ENCODE measurements at regions of chr13 and their contacts with region 1.

Region 1: DNA sequence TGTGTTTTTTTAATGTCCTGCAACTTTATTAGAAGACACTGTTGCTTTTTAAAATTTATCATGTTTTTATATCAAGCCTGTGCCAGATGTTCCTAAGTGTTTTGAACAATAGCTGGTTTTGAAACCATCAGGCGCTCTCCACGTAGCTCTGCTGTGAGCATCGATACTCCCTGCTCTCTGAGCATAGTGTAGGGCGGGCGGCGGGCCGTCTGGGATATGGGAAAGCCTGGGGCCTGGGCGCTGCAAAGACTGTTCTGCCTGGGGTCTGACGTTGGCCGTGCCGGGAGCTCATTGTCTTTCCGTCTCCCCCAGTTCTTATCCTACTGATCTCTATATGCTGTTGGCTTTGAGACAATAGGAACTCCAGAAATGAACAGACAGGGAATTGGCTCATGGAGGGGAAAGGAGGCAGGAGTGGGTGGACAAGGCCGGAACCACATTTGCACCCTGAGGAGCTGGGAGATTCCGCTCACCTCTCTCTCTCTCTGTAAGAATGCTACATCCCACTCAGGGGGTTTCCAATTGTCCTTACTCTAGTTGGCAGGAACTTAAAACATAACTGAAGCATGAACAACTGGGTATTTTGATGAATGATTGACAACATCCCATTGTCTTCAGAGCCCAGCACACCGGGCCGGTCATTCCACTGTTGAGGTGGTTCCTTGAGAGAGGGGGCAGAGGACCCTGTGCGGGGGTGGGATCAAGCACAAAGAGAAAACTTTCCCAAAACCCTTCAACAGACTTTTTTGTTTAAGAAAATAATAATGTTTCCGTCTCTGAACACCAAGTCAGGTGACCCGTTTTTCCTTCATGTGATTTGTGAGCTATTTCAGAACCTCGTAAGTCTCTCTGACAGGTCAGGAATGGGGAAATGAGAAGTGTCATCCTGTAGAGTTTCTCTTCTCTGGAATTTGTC is 64.7 kb downstream of the COL4A2 start:
- DNase-seq: peak; percentile 40
- ATAC-seq: peak; percentile 86
- H3K4me3 ChIP-seq: no peak overlapping the region
- H3K27ac ChIP-seq: no peak overlapping the region
- H3K4me1 ChIP-seq: no peaks in the 10 kb centered on the region
- H3K27me3 ChIP-seq: no peaks in the 10 kb centered on the region
- CTCF ChIP-seq: no peak
- EP300 ChIP-seq: peak; percentile 10 to 54; a peak in 2 of 4 replicates
- POLR2A ChIP-seq: no peak
- RAD21 ChIP-seq: no peak

Region 2: GRCh38 chr13:110354715-110355473 is 16.9 kb before region 1 on chr13:
- CTCF ChIA-PET with region 1: interaction called, 31 read pairs
- POLR2A ChIA-PET with region 1: interaction called, 5 read pairs
- RAD21 ChIA-PET with region 1: interaction called, 14 read pairs
- SMC1A ChIA-PET with region 1: interaction called, 30 read pairs
- in situ Hi-C with region 1: no loop called
- intact Hi-C with region 1: no loop called
- DNase-seq: no peak
- ATAC-seq: peak; percentile 75
- H3K4me3 ChIP-seq: no peak overlapping the region
- H3K27ac ChIP-seq: no peak overlapping the region
- H3K4me1 ChIP-seq: no peaks in the 10 kb centered on the region; the same call in 1 of the 2 replicates
- H3K27me3 ChIP-seq: no peaks in the 10 kb centered on the region
- CTCF ChIP-seq: no peak
- EP300 ChIP-seq: no peak
- POLR2A ChIP-seq: no peak
- RAD21 ChIP-seq: no peak

Region 3: DNA sequence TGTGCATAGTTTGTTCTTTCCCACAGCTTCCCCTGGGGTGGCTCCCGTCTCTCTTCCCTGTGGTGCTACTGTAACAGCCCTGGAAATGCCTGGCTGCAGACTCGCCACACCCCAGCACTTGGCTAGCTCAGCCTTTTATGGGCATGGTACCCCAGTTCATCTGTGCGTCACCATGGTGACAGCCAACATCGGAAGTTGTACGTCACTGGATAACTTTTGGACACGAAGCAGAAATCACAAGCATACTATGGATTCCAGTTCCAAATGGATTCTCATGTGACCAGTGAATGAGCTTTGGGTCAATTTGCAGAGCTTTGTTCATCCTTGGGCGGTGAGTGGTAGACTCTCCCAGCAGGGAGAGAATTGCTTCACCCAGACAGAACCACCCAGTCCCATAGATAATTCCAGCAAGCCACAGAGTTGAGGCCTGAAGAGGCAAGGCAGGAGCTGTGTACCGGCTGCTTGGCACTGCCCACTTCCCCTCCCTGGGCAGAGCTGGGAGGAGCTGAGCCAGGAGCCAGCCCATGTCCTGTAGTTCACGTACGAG is 10.4 kb before region 1 on chr13:
- CTCF ChIA-PET with region 1: interaction called, 31 read pairs
- POLR2A ChIA-PET with region 1: interaction called, 5 read pairs
- RAD21 ChIA-PET with region 1: interaction called, 14 read pairs
- SMC1A ChIA-PET with region 1: interaction called, 30 read pairs
- in situ Hi-C with region 1: no loop called
- intact Hi-C with region 1: no loop called
- DNase-seq: no peak
- ATAC-seq: peak; percentile 46
- H3K4me3 ChIP-seq: no peak overlapping the region
- H3K27ac ChIP-seq: no peak overlapping the region
- H3K4me1 ChIP-seq: no peaks in the 10 kb centered on the region
- H3K27me3 ChIP-seq: no peaks in the 10 kb centered on the region
- CTCF ChIP-seq: no peak
- EP300 ChIP-seq: no peak
- POLR2A ChIP-seq: no peak
- RAD21 ChIP-seq: no peak

Measured in GM12878 (cell line).